Endothelial cell of umbilical vein (primary cell): ENCODE measurements at regions of chr2 and their contacts with region 1.

Region 1: GRCh38 chr2:217261452-217261851 is 401.6 kb upstream of the TNP1 start:
- DNase-seq: peak; percentile 69
- H3K4me3 ChIP-seq: no peak overlapping the region
- H3K27ac ChIP-seq: peak overlapping the region; percentile 50
- H3K4me1 ChIP-seq: peaks cover 5% of the 10 kb centered on the region
- H3K27me3 ChIP-seq: no peaks in the 10 kb centered on the region
- CTCF ChIP-seq: no peak
- POLR2A ChIP-seq: no peak

Region 2: DNA sequence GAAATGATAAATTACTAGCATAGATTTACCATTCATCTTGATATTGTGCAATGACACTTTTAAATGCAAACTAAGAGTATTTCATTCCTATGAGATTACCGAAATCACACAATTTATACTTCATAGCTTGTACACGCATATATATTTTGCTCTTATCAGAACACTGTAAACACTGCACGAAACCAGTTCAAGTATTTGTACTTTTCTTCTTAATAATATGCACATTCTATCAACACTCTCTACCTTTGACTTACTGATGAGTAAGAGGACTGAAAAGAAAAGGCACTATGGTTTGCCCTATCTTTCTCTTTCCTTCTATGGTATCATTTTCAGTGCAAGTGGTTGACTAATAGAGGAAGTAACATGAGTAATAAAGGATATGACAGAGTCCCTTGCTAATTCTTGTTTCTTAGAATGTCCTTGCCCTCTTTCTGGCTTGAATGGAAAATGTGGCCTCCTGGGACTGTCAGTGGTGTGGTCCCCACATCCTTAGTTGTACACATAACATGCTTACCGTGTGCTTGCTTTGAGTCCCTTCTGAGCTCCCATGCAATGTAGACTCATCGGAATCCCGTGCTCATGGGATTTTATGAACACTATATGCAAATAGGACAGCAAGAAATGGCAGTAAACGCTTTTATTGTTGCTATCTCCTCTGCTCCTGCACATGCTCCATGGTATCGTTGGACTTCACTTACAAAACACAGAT is 38.1 kb before region 1 on chr2:
- CTCF ChIA-PET with region 1: no interaction called
- POLR2A ChIA-PET with region 1: no interaction called
- dilution Hi-C with region 1: no loop called
- intact Hi-C with region 1: loop called (anchors 1 kb)
- DNase-seq: peak; percentile 90
- H3K4me3 ChIP-seq: no peak overlapping the region
- H3K27ac ChIP-seq: peak overlapping the region; percentile 89
- H3K4me1 ChIP-seq: peaks cover 13% of the 10 kb centered on the region
- H3K27me3 ChIP-seq: no peaks in the 10 kb centered on the region
- CTCF ChIP-seq: no peak
- POLR2A ChIP-seq: no peak

Region 3: GRCh38 chr2:217289177-217289876 is 27.9 kb after region 1 on chr2:
- CTCF ChIA-PET with region 1: no interaction called
- POLR2A ChIA-PET with region 1: no interaction called
- dilution Hi-C with region 1: no loop called
- intact Hi-C with region 1: no loop called
- DNase-seq: no peak
- H3K4me3 ChIP-seq: no peak overlapping the region
- H3K27ac ChIP-seq: no peak overlapping the region
- H3K4me1 ChIP-seq: no peaks in the 10 kb centered on the region
- H3K27me3 ChIP-seq: no peaks in the 10 kb centered on the region
- CTCF ChIP-seq: no peak
- POLR2A ChIP-seq: no peak

Region 4: DNA sequence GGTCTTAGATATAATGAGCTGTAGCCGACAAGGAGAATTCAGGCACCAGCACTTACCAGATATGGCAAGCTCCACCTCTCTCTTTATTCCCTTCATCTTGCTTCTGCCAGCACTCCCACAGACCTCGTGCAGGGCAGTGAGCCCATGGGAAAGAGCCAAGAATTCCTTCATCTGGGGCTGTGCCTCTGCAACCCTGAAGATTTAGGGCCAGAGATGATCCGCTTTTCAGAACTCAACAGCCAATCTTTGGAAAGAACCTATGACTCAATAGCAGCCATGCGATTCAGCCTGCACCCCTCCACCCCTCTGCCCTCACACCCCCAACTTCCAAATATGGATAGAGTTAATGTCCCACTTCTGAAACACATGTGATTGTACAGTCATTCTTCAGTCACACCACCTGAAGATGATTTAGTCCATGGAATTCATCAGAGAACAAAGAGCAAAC is 132.2 kb after region 1 on chr2:
- CTCF ChIA-PET with region 1: no interaction called
- POLR2A ChIA-PET with region 1: no interaction called
- dilution Hi-C with region 1: no loop called
- intact Hi-C with region 1: no loop called
- DNase-seq: no peak
- H3K4me3 ChIP-seq: no peak overlapping the region
- H3K27ac ChIP-seq: no peak overlapping the region
- H3K4me1 ChIP-seq: no peaks in the 10 kb centered on the region
- H3K27me3 ChIP-seq: no peaks in the 10 kb centered on the region
- CTCF ChIP-seq: no peak
- POLR2A ChIP-seq: no peak